Naive thymus-derived CD4-positive, alpha-beta T cell (primary cell): ENCODE measurements at regions of chr10 and their contacts with region 1.

Region 1: GRCh38 chr10:104966563-104967297 is 325.6 kb downstream of the SORCS3 start:
- DNase-seq: no peak
- ATAC-seq: no peak
- H3K4me3 ChIP-seq: no peak overlapping the region
- H3K4me3 Mint-ChIP-seq: no peak overlapping the region
- H3K27ac ChIP-seq: no peak overlapping the region
- H3K27ac Mint-ChIP-seq: no peak overlapping the region
- H3K4me1 ChIP-seq: no peaks in the 10 kb centered on the region
- H3K4me1 Mint-ChIP-seq: peaks cover 0 to 26% (median 2%) of the 10 kb centered on the region in 7 donors
- H3K27me3 ChIP-seq: no peaks in the 10 kb centered on the region
- H3K27me3 Mint-ChIP-seq: no peaks in the 10 kb centered on the region

Region 2: GRCh38 chr10:104246976-104247375 is 719.8 kb before region 1 on chr10:
- CTCF ChIA-PET with region 1: no interaction called
- POLR2A ChIA-PET with region 1: no interaction called
- intact Hi-C with region 1: no loop called
- DNase-seq: no peak
- ATAC-seq: peak; percentile 93
- H3K4me3 ChIP-seq: no peak overlapping the region
- H3K4me3 Mint-ChIP-seq: peak overlapping the region in 1 of 10 donors; percentile 26
- H3K27ac ChIP-seq: no peak overlapping the region
- H3K27ac Mint-ChIP-seq: peak overlapping the region in 1 of 9 donors; percentile 69
- H3K4me1 ChIP-seq: no peaks in the 10 kb centered on the region
- H3K4me1 Mint-ChIP-seq: peaks cover 0 to 19% (median 0%) of the 10 kb centered on the region in 7 donors
- H3K27me3 ChIP-seq: no peaks in the 10 kb centered on the region
- H3K27me3 Mint-ChIP-seq: peaks cover 0 to 28% (median 5%) of the 10 kb centered on the region in 5 donors

Region 3: DNA sequence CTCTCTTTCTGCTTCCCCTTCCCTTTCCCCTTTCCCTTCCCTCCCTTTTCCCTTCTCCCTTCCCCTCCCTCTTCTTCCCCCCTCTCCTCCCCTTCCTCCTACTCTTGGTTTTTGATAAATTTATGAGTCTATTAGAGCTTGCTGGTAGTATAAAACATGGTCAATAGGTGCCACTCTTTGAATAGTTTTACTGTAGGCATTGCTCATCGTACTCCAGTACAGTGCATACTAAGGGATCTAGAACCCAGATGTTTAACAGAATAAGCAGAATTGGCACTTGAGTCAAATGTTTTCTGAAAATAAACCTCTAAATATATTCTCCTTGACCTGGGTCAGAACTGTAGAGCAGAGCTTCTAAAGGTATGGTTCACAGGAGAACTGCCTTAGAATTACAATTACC is 199.0 kb before region 1 on chr10:
- CTCF ChIA-PET with region 1: no interaction called
- POLR2A ChIA-PET with region 1: interaction called, 10 read pairs
- intact Hi-C with region 1: no loop called
- DNase-seq: peak in 1 of 9 donors; percentile 3
- ATAC-seq: no peak
- H3K4me3 ChIP-seq: no peak overlapping the region
- H3K4me3 Mint-ChIP-seq: no peak overlapping the region
- H3K27ac ChIP-seq: no peak overlapping the region
- H3K27ac Mint-ChIP-seq: no peak overlapping the region
- H3K4me1 ChIP-seq: no peaks in the 10 kb centered on the region
- H3K4me1 Mint-ChIP-seq: no peaks in the 10 kb centered on the region
- H3K27me3 ChIP-seq: no peaks in the 10 kb centered on the region
- H3K27me3 Mint-ChIP-seq: peaks cover 2 to 19% (median 14%) of the 10 kb centered on the region in 5 donors

Region 4: DNA sequence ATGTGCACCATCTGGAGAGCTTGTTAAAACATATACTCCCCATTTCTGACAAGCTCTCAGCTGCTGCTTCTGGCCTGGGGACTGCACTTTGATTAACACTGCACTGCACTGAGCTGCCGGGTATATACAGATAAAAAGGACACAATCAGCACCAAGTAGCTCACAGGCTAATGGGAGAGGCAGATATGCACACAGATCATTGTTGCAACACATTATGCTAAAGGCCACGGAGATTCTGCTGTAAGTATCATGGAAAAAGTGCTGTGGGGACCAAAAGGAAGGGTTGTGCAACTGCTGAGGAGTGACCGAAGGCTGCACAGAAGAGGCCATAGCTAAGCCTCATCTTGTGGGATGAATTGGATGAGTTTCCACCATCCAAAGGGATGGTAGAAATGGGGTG is 129.6 kb after region 1 on chr10:
- CTCF ChIA-PET with region 1: no interaction called
- POLR2A ChIA-PET with region 1: no interaction called
- intact Hi-C with region 1: no loop called
- DNase-seq: no peak
- ATAC-seq: no peak
- H3K4me3 ChIP-seq: no peak overlapping the region
- H3K4me3 Mint-ChIP-seq: no peak overlapping the region
- H3K27ac ChIP-seq: no peak overlapping the region
- H3K27ac Mint-ChIP-seq: no peak overlapping the region
- H3K4me1 ChIP-seq: no peaks in the 10 kb centered on the region
- H3K4me1 Mint-ChIP-seq: no peaks in the 10 kb centered on the region
- H3K27me3 ChIP-seq: no peaks in the 10 kb centered on the region
- H3K27me3 Mint-ChIP-seq: no peaks in the 10 kb centered on the region